ENCODE measurements at regions of chr4 and their contacts with region 1.

Region 1: DNA sequence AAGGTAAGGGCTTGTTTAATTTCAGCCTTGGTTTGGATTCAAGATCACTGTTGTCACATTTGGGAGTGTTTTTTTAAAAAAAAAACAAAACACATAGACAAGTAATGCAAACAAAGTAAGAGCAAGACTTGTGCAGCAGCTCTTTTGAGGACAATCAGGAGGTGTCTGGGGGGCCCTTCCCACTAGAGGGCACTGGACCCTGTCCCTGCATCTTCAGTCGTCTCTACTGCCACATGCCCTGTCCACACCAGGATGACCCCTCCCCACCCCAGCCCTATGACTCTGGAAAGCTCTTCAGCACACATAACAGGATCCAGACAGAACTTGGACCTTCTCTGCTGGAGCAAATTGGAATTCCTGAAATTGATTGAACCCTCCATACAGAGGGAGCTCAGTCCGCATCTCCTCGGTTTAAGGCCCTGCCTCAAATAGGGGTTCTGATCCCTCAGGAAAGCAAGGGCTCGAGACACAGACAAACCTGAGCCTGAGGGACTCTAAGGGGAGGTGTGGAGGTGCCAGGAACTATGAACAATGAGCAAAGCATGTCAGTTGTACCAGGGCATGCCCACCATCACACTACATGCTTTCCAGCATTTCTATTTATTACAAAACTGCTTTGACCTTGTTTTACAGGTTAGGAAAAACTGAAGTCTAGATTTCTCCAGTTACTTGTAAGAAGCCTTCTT is 70.9 kb downstream of the USP46 start:
- DNase-seq: no peak
- ATAC-seq: peak; percentile 70

Region 2: DNA sequence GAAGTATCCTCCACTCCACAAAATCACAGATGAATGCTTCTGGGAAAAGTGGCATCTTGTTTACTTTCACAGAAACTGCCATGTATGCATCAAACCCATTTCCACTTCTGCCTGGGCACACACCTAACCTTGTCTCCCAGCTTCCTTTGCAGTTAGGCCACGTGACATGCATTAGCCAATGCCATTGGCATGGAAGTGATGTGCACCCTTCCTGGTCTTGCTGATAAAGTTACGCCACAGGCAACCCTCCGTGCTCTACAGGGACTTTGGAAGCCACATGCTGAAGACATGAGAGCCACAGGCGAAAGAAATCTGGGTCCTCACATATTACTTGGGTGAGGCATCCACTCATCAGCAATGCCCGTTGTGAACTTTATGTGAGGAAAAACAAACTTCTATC is 52.4 kb before region 1 on chr4:
- intact Hi-C with region 1: no loop called
- DNase-seq: no peak
- ATAC-seq: no peak

Region 3: DNA sequence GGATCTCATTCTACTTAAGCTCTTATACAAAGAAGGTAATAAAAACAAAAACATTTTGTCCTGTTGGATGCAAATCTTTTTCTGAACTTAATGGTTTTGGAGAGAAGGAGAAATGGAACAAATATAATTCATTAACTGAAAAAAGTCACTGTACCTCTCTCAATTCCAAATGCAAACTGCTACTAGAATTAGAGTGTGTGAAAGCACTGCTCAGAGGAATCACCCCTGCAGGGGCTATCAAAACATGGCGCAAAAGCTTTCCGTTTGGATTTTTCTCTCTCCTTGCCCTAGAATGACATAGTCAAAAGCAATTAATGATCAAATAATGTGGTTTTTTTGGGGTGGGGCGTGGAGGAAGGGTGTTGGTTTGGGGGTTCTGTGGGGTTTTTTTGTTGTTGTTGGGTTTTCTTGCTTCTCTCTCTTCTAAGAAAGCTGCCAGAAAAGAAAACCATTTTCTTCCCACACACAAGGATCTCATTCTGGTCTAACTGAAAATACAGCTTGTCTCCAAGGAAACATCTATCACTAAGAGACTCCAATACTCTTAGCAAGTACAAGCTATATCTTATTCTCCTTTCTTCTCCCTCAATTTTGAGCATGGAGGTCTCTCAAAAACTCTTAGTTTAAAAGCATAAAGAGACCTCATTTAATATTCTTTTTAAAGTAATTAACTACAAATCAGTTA is 29.2 kb after region 1 on chr4:
- intact Hi-C with region 1: no loop called
- DNase-seq: no peak
- ATAC-seq: no peak

Region 4: GRCh38 chr4:52659722-52660261 is 71.6 kb after region 1 on chr4:
- intact Hi-C with region 1: loop called (anchors 10 kb)
- DNase-seq: peak; percentile 82
- ATAC-seq: peak; percentile 67

Measured in sciatic nerve (tissue), 2 donors.